Sigmoid colon (tissue), 7 donors: ENCODE measurements at regions of chr6 and their contacts with region 1.

Region 1: GRCh38 chr6:166989427-166990032 is 9.7 kb upstream of the CEP43 start:
- DNase-seq: no peak
- H3K4me3 ChIP-seq: no peak overlapping the region
- H3K27ac ChIP-seq: peak overlapping the region in 1 of 4 donors; percentile 35
- H3K4me1 ChIP-seq: peaks cover 0 to 17% (median 13%) of the 10 kb centered on the region in 4 donors
- H3K27me3 ChIP-seq: no peaks in the 10 kb centered on the region
- CTCF ChIP-seq: peak; percentile 7 to 53 (median 34)
- EP300 ChIP-seq: no peak
- POLR2A ChIP-seq: no peak

Region 2: GRCh38 chr6:166786704-166787293 is 202.7 kb before region 1 on chr6:
- intact Hi-C with region 1: loop called (anchors 2 kb)
- DNase-seq: no peak
- H3K4me3 ChIP-seq: no peak overlapping the region
- H3K27ac ChIP-seq: no peak overlapping the region
- H3K4me1 ChIP-seq: no peaks in the 10 kb centered on the region
- H3K27me3 ChIP-seq: no peaks in the 10 kb centered on the region
- CTCF ChIP-seq: peak; percentile 37 to 75 (median 61)
- EP300 ChIP-seq: no peak
- POLR2A ChIP-seq: no peak

Region 3: GRCh38 chr6:166862287-166862977 is 127.1 kb before region 1 on chr6:
- intact Hi-C with region 1: loop called (anchors 5 kb)
- DNase-seq: no peak
- H3K4me3 ChIP-seq: peak overlapping the region; percentile 53 to 75 (median 66)
- H3K27ac ChIP-seq: peak overlapping the region; percentile 33 to 72 (median 54)
- H3K4me1 ChIP-seq: peaks cover 0 to 29% (median 19%) of the 10 kb centered on the region in 4 donors
- H3K27me3 ChIP-seq: peaks cover 0 to 5% (median 0%) of the 10 kb centered on the region in 3 donors
- CTCF ChIP-seq: no peak
- EP300 ChIP-seq: no peak
- POLR2A ChIP-seq: no peak

Region 4: GRCh38 chr6:167093922-167094432 is 104.4 kb after region 1 on chr6:
- intact Hi-C with region 1: no loop called
- DNase-seq: no peak
- H3K4me3 ChIP-seq: no peak overlapping the region
- H3K27ac ChIP-seq: no peak overlapping the region
- H3K4me1 ChIP-seq: peaks cover 0 to 3% (median 0%) of the 10 kb centered on the region in 4 donors
- H3K27me3 ChIP-seq: no peaks in the 10 kb centered on the region
- CTCF ChIP-seq: no peak
- EP300 ChIP-seq: no peak
- POLR2A ChIP-seq: no peak

Region 5: DNA sequence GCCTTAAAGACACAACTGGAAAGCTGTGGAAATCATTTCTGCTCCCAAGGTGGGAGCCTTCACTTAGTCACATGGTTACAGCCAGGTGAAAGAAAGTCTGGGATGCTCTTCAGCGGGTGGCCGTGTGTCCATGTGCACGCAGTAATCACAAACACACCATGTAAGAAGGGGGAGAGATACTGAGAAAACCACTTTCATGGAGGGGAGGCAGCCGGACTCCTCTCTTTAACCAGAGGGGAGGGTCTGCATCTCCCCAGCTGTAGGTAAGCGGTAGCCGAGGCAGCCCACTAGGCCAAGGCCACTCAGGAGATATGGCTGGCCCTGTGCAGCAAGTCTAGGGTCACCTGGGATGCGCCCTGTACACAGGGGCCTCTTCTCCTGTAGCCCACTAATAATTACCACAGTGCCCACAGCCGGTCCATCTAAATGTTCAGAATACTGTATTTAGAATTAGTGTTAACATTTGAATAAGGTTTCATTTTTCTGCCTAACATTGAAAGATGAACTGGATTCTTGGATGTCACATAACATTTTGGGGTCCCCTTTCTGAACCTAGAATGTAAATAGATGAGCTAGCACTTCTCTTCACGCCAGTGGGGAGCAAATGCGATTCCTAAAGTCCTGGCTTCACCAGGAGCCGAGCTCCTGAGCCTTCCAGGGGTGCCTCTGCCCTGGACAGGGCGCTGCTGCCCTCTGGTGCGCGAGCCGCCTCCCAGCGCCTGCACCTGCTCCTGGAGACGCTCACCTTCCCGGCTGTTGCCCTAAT is 152.3 kb after region 1 on chr6:
- intact Hi-C with region 1: no loop called
- DNase-seq: no peak
- H3K4me3 ChIP-seq: no peak overlapping the region
- H3K27ac ChIP-seq: no peak overlapping the region
- H3K4me1 ChIP-seq: peaks cover 0 to 13% (median 4%) of the 10 kb centered on the region in 4 donors
- H3K27me3 ChIP-seq: no peaks in the 10 kb centered on the region
- CTCF ChIP-seq: peak; percentile 71 to 85 (median 79)
- EP300 ChIP-seq: no peak
- POLR2A ChIP-seq: no peak

Region 6: GRCh38 chr6:167285077-167285770 is 295.7 kb after region 1 on chr6:
- intact Hi-C with region 1: loop called (anchors 5 kb)
- DNase-seq: no peak
- H3K4me3 ChIP-seq: no peak overlapping the region
- H3K27ac ChIP-seq: no peak overlapping the region
- H3K4me1 ChIP-seq: peaks cover 0 to 4% (median 0%) of the 10 kb centered on the region in 4 donors
- H3K27me3 ChIP-seq: no peaks in the 10 kb centered on the region
- CTCF ChIP-seq: no peak
- EP300 ChIP-seq: no peak
- POLR2A ChIP-seq: no peak